ENCODE measurements at regions of chr17 and their contacts with region 1.

Region 1: GRCh38 chr17:55969562-55970324 is 183.5 kb upstream of the ANKFN1 start:
- DNase-seq: no peak
- H3K4me3 ChIP-seq: no peak overlapping the region
- H3K27ac ChIP-seq: no peak overlapping the region
- H3K4me1 ChIP-seq: no peaks in the 10 kb centered on the region
- H3K27me3 ChIP-seq: no peaks in the 10 kb centered on the region
- CTCF ChIP-seq: no peak
- EP300 ChIP-seq: no peak
- POLR2A ChIP-seq: no peak

Region 2: DNA sequence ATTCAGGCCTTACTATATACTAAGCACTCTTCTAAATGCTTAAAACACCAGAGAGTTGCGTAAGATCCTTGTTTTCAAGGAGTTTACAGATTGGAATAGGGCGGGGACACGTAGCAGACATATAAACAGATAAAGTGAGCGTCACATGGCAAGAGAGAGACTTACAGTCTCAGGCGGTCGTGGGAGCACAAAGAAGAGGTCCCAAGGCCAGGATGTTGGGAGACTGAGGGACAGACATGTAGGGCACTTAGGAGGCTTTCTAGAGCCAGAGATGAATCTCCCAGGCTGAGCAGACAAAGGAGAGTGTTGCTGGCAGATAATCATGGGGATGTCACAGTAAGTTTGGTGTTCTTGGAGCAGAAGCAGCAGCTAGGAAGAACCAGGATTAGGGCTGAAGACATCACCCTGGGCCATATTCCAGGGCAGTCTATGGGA is 64.5 kb after region 1 on chr17:
- in situ Hi-C with region 1: loop called in 1 of 4 experiments (anchors 10 kb)
- intact Hi-C with region 1: no loop called
- DNase-seq: no peak
- H3K4me3 ChIP-seq: no peak overlapping the region
- H3K27ac ChIP-seq: peak overlapping the region in 2 of 4 donors; percentile 17 to 28
- H3K4me1 ChIP-seq: no peaks in the 10 kb centered on the region
- H3K27me3 ChIP-seq: no peaks in the 10 kb centered on the region
- CTCF ChIP-seq: no peak
- EP300 ChIP-seq: no peak
- POLR2A ChIP-seq: no peak

Measured in transverse colon (tissue), 4 donors.